Heart right ventricle (tissue), 16 donors: ENCODE measurements at regions of chr1 and their contacts with region 1.

Region 1: GRCh38 chr1:111227851-111228747 is 586 bp downstream of the CHI3L2 start:
- DNase-seq: peak in 1 of 2 donors; percentile 49
- ATAC-seq: peak; percentile 89 to 96 (median 94)
- H3K4me3 ChIP-seq: no peak overlapping the region
- H3K27ac ChIP-seq: peak overlapping the region in 8 of 10 donors; percentile 29 to 66 (median 60)
- H3K4me1 ChIP-seq: peaks cover 0 to 26% (median 0%) of the 10 kb centered on the region in 9 donors
- H3K27me3 ChIP-seq: no peaks in the 10 kb centered on the region
- CTCF ChIP-seq: no peak

Region 2: DNA sequence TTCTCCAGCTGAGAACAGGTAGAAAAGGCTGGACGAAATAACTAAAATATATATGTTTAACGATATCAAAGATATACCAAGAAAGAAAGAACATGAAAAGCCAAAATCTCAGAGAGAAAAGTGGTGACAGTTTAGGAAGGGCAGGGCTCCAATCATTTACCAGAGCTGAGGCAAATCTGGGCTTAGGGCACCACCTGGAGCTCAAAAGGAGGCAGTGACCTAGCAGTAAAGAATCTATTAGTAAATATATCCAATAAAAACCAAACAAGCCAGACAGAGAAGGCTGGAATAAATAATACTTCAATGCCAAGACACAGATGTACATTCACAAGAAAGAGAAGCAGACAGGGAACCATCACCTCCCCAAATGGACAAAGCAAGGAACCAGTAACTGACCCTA is 106.1 kb after region 1 on chr1:
- intact Hi-C with region 1: loop called in 8 of 10 experiments (anchors 2 to 10 kb)
- DNase-seq: no peak
- ATAC-seq: peak in 2 of 8 donors; percentile 58 to 71
- H3K4me3 ChIP-seq: no peak overlapping the region
- H3K27ac ChIP-seq: no peak overlapping the region
- H3K4me1 ChIP-seq: no peaks in the 10 kb centered on the region
- H3K27me3 ChIP-seq: peaks cover 0 to 3% (median 0%) of the 10 kb centered on the region in 7 donors
- CTCF ChIP-seq: peak in 8 of 9 donors; percentile 24 to 62 (median 50)

Region 3: GRCh38 chr1:111381457-111381856 is 153.4 kb after region 1 on chr1:
- intact Hi-C with region 1: no loop called
- DNase-seq: no peak
- ATAC-seq: no peak
- H3K4me3 ChIP-seq: no peak overlapping the region
- H3K27ac ChIP-seq: no peak overlapping the region
- H3K4me1 ChIP-seq: no peaks in the 10 kb centered on the region
- H3K27me3 ChIP-seq: peaks cover 0 to 12% (median 3%) of the 10 kb centered on the region in 7 donors
- CTCF ChIP-seq: no peak

Region 4: GRCh38 chr1:111592389-111593361 is 364.6 kb after region 1 on chr1:
- intact Hi-C with region 1: no loop called
- DNase-seq: peak; percentile 85 to 91
- ATAC-seq: peak; percentile 86 to 98 (median 94)
- H3K4me3 ChIP-seq: peak overlapping the region in 5 of 10 donors; percentile 0 to 27 (median 11)
- H3K27ac ChIP-seq: peak overlapping the region; percentile 58 to 90 (median 88)
- H3K4me1 ChIP-seq: peaks cover 15 to 56% (median 48%) of the 10 kb centered on the region in 9 donors
- H3K27me3 ChIP-seq: no peaks in the 10 kb centered on the region
- CTCF ChIP-seq: no peak